Thyroid gland (tissue), 4 donors: ENCODE measurements at regions of chr14 and their contacts with region 1.

Region 1: DNA sequence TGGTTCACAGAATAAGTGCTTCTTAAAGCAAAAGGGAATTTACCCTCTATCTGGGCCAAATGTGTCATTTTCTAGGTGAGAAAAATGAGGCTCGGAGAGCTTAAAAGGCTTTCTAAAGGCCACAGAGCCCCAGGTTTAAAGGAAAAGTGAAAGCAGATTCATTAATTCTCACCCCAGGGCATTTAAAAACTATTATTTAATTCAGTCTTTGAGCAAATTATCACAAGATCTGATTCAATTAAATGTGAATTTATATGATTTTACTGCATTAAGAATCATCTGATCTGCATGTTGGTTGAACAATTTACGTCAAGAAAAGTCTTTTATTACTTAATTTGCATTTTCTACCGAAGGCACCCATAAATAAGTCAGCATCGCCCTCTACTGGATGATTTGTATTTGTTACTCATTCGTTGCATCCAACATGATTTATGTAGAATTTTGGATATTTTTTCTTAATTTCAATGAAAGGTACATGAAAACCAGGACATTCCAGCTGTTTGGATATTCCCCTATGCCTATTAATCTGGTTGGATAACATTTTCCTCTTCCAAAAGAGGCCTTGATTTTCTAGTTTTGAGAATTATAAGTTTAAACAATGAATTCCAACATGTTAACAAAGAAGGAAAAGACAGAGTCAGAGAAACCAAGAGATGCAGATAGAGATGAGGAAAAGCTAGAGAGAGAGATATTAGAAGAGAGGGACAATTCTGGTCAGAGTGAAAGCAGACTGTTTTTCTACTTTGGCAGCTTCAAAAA is 19.1 kb upstream of the DHRS7 start:
- DNase-seq: no peak
- H3K4me3 ChIP-seq: peak overlapping the region in 1 of 3 donors; percentile 2
- H3K27ac ChIP-seq: peak overlapping the region in 2 of 3 donors; percentile 11 to 33
- H3K4me1 ChIP-seq: no peaks in the 10 kb centered on the region
- H3K27me3 ChIP-seq: no peaks in the 10 kb centered on the region
- CTCF ChIP-seq: peak; percentile 53 to 97 (median 78)
- POLR2A ChIP-seq: no peak

Region 2: DNA sequence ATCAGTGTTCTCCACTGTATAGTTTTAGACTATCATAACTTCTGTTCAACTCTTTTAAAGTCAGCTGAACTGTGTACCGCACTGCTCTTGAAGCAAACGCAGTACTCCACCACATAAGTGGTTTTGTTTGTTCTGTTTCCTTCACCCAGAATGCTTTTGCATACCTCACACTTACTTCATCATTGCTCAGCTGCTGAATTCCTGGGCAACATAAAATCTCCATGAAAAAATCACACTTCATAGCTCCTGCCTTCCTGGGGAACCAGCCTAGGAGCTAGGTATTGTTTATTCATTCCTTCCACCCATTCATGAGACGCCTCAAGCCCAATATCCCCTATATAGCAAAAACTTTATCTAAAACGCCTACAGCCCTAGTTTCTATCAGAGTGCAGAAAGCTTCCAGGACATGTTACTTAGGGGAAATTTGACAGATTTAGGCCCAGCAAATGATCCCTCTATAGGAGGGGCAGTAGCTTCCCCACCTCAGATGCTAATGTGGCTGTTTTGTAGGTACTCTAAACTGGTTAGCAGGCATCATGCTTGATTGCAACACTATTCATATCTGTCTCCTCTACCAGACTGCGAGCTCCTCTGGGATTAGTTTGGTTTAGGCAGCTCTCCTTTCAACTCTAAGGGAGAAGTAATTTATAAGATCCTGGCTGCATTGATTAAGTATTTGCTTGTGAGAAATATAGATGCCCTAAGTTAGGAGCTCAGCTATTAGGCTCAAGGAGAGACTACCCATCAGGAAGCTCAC is 219.9 kb before region 1 on chr14:
- intact Hi-C with region 1: loop called (anchors 5 kb)
- DNase-seq: no peak
- H3K4me3 ChIP-seq: no peak overlapping the region
- H3K27ac ChIP-seq: no peak overlapping the region
- H3K4me1 ChIP-seq: peaks cover 0 to 9% of the 10 kb centered on the region in 2 donors
- H3K27me3 ChIP-seq: no peaks in the 10 kb centered on the region
- CTCF ChIP-seq: no peak
- POLR2A ChIP-seq: no peak

Region 3: GRCh38 chr14:60064491-60065072 is 119.7 kb before region 1 on chr14:
- intact Hi-C with region 1: loop called (anchors 5 kb)
- DNase-seq: no peak
- H3K4me3 ChIP-seq: no peak overlapping the region
- H3K27ac ChIP-seq: no peak overlapping the region
- H3K4me1 ChIP-seq: no peaks in the 10 kb centered on the region
- H3K27me3 ChIP-seq: no peaks in the 10 kb centered on the region
- CTCF ChIP-seq: peak in 4 of 6 experiments; percentile 28 to 72 (median 56)
- POLR2A ChIP-seq: no peak

Region 4: GRCh38 chr14:60637479-60638315 is 453.4 kb after region 1 on chr14:
- intact Hi-C with region 1: no loop called
- DNase-seq: no peak
- H3K4me3 ChIP-seq: no peak overlapping the region
- H3K27ac ChIP-seq: peak overlapping the region in 1 of 3 donors; percentile 25
- H3K4me1 ChIP-seq: peaks cover 17 to 22% of the 10 kb centered on the region in 2 donors
- H3K27me3 ChIP-seq: peaks cover 49% of the 10 kb centered on the region
- CTCF ChIP-seq: no peak
- POLR2A ChIP-seq: no peak